HEK293T (cell line): ENCODE measurements at regions of chrX and their contacts with region 1.

Region 1: GRCh38 chrX:108224727-108225621 is 133.4 kb downstream of the ATG4A start:
- DNase-seq: peak; percentile 70

Region 2: GRCh38 chrX:108304210-108304609 is 79.2 kb after region 1 on chrX:
- CTCF ChIA-PET with region 1: interaction called, 28 read pairs
- POLR2A ChIA-PET with region 1: no interaction called
- DNase-seq: peak; percentile 56

Region 3: GRCh38 chrX:108537005-108537404 is 312.0 kb after region 1 on chrX:
- CTCF ChIA-PET with region 1: interaction called, 11 read pairs
- POLR2A ChIA-PET with region 1: no interaction called
- DNase-seq: peak; percentile 50